ENCODE measurements at regions of chr15 and their contacts with region 1.

Region 1: GRCh38 chr15:45198337-45199135 is 10.8 kb upstream of the SHF start:
- DNase-seq: peak; percentile 91 to 94
- H3K4me3 ChIP-seq: peak overlapping the region; percentile 59
- H3K4me3 Mint-ChIP-seq: no peak overlapping the region
- H3K27ac Mint-ChIP-seq: no peak overlapping the region
- H3K4me1 ChIP-seq: no peaks in the 10 kb centered on the region
- H3K4me1 Mint-ChIP-seq: peaks cover 7% of the 10 kb centered on the region
- H3K27me3 ChIP-seq: no peaks in the 10 kb centered on the region
- H3K27me3 Mint-ChIP-seq: no peaks in the 10 kb centered on the region
- CTCF ChIP-seq: peak; percentile 68 to 69

Region 2: DNA sequence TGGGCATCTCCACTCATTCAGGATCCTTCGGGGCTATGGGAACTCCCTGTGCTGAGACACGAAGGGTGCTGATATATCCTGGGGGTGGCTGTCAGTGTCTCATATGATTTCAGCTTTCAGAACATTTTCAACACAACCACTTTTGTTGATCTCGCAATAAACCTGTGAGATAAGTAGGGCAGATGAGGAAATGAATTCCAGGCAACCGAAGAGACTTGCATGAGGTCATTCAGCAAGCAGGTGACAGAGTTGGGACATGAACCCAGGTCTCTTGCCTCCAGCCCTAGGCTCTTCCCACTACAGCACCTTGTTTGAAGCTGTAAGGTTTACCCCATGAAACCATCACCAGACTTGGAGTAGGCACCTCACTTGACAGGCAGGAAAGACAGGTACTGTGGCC is 52.1 kb before region 1 on chr15:
- CTCF ChIA-PET with region 1: no interaction called
- POLR2A ChIA-PET with region 1: no interaction called
- intact Hi-C with region 1: no loop called
- DNase-seq: no peak
- H3K4me3 ChIP-seq: no peak overlapping the region
- H3K4me3 Mint-ChIP-seq: no peak overlapping the region
- H3K27ac Mint-ChIP-seq: no peak overlapping the region
- H3K4me1 ChIP-seq: peaks cover 5% of the 10 kb centered on the region; the same call in 1 of the 2 replicates
- H3K4me1 Mint-ChIP-seq: peaks cover 6% of the 10 kb centered on the region
- H3K27me3 ChIP-seq: no peaks in the 10 kb centered on the region
- H3K27me3 Mint-ChIP-seq: no peaks in the 10 kb centered on the region
- CTCF ChIP-seq: no peak

Region 3: DNA sequence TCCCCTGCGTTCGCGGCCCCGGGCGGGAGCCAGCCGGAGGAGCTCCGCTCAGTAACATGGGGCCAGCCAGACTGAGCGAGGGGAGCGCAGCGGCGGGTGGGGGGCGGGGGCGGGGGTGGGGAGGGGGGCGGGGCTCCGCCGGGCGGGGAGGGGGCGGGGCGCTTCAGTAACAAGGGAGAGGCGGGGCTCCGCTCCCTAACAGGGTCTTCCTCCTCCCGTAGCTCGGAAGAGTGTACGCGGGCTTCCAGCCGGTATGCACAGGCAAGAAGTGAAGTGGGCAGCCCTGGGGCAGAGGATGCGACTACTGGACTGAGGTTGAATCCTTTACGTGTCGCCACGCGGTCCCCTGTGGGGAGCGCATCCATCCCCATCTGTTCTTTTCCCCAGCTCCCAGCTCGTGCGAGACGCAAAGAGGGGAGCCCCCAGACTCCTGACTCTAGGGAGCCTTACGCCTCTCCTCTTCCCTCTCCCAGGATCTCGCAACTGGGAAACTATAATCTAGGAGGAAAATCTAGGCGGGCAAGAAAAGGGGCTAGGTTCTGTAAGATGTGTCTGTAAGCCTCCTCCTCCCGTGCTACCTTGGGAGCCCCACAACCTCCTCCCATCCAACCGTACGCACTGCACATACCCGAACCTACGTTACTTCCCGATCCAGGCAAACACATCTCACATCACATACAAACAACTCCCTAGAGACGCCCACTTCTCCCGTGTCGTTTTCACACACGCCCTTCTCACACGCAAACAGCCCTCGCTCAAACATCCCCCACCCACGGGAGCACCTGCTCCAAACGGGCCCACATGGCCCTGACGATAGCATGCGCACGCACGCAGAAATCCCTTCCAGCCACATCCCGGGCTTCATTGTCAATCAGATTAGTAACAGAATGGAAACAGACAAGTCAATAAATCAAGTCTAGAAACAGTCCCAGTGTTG is 10.4 kb before region 1 on chr15 and contains the start of gene SHF:
- CTCF ChIA-PET with region 1: interaction called, 4 read pairs
- POLR2A ChIA-PET with region 1: no interaction called
- intact Hi-C with region 1: loop called (anchors 1 kb)
- DNase-seq: peak in 1 of 2 experiments; percentile 47
- H3K4me3 ChIP-seq: peak within 1 kb of the TSS; percentile 47
- H3K4me3 Mint-ChIP-seq: peak within 1 kb of the TSS; percentile 77
- H3K27ac Mint-ChIP-seq: no peak within 1 kb of the TSS
- H3K4me1 ChIP-seq: peaks cover 7% of the 10 kb centered on the region
- H3K4me1 Mint-ChIP-seq: peaks cover 13% of the 10 kb centered on the region
- H3K27me3 ChIP-seq: no peaks in the 10 kb centered on the region
- H3K27me3 Mint-ChIP-seq: no peaks in the 10 kb centered on the region
- CTCF ChIP-seq: no peak
- total RNA-seq, gene SHF: 11.9 and 12.9 TPM in 2 replicates

Region 4: DNA sequence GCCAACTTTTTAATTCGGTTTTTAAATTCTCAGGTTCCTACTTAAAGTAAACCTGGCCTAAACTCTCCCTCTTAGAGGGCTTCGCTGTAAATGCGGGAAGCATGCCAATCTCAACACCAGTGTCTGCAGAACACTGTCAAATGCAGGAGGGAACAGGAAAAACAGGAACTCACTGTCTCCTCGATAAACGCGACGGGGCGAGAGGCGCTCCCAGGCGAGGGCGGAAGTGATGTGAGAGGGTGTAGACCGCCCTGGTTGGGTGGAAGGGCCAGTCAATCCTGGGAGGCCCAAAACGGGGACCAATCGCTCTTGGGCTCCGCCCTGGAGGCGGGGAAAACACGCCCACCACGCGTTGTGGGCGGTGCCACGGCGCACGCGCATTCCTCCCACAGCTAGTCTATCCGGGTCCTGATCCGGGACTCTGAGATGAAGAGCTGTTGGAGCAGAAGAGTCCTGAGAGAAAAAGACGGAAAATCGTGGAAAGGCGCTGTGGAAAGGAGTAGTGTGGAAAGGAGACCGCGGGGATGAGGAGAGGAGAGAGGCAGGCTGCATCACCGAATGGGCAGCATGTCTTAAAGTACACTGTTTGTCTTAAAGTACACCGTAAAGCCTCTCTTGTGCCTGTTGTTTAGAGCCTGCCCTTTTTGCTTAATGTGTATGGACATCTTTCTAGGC is 80.6 kb after region 1 on chr15:
- CTCF ChIA-PET with region 1: interaction called, 10 read pairs
- POLR2A ChIA-PET with region 1: interaction called, 3 read pairs
- intact Hi-C with region 1: loop called (anchors 1 kb)
- DNase-seq: peak; percentile 98
- H3K4me3 ChIP-seq: peak overlapping the region; percentile 62
- H3K4me3 Mint-ChIP-seq: peak overlapping the region; percentile 80
- H3K27ac Mint-ChIP-seq: peak overlapping the region; percentile 74
- H3K4me1 ChIP-seq: peaks cover 15% of the 10 kb centered on the region
- H3K4me1 Mint-ChIP-seq: peaks cover 2% of the 10 kb centered on the region
- H3K27me3 ChIP-seq: no peaks in the 10 kb centered on the region
- H3K27me3 Mint-ChIP-seq: no peaks in the 10 kb centered on the region
- CTCF ChIP-seq: no peak

Measured in Caco-2 (cell line).